Activated T-helper 1 cell treated with anti-CD3 and anti-CD28 coated beads, Interleukin-12 subunit alpha, Interleukin-12 subunit beta, Interleukin-2, Interleukin-4 antibody, amounts not matched to agents 30 ng/mL and 10 ng/mL and 1 ng/mL, durations not matched to agents 14 hours and 24 hours and 36 hours (primary cell): ENCODE measurements at regions of chr14 and their contacts with region 1.

Region 1: GRCh38 chr14:24051789-24052655 is at the start of gene CARMIL3:
- DNase-seq: peak; percentile 67
- H3K4me3 Mint-ChIP-seq: peak within 1 kb of the TSS; percentile 85
- H3K27ac Mint-ChIP-seq: peak within 1 kb of the TSS; percentile 76
- H3K4me1 Mint-ChIP-seq: peaks cover 22% of the 10 kb centered on the region
- H3K27me3 Mint-ChIP-seq: peaks cover 17% of the 10 kb centered on the region
- total RNA-seq, gene CARMIL3: 3.0 and 3.4 TPM in 2 replicates

Region 2: GRCh38 chr14:23984891-23985602 is 67.0 kb before region 1 on chr14:
- intact Hi-C with region 1: loop called (anchors 1 kb)
- DNase-seq: no peak
- H3K4me3 Mint-ChIP-seq: no peak overlapping the region
- H3K27ac Mint-ChIP-seq: no peak overlapping the region
- H3K4me1 Mint-ChIP-seq: peaks cover 25% of the 10 kb centered on the region
- H3K27me3 Mint-ChIP-seq: no peaks in the 10 kb centered on the region

Region 3: DNA sequence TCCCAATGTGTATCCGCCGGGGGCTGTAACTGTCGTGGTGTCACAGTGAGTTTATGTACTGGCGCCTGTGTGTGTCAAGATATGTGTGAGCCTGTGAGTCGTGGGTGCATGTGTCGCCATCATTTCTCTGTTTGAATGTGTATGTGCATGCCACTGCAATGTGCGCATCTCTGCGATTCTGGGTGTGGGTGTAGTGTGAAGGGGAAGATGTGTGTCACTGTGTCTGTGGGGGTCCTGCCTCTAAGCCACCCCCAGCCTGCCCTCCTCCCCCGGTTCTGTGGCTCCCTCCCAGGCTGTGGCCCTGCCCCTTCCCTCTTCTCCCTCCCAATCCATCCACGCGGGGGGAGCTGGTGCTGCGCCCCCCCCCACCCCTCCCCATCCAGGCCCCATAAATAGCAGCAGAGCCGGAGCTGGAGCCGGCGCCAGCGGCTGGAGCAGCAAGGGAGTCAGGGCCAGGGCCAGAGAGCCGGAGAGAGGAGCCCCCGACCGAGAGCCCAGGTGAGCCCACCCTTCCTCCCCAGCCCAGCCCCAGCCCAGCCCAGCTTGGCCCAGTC is 19.2 kb after region 1 on chr14 and contains the start of gene CPNE6:
- intact Hi-C with region 1: loop called (anchors 1 kb)
- DNase-seq: no peak
- H3K4me3 Mint-ChIP-seq: no peak within 1 kb of the TSS
- H3K27ac Mint-ChIP-seq: peak within 1 kb of the TSS; percentile 62
- H3K4me1 Mint-ChIP-seq: peaks cover 21% of the 10 kb centered on the region
- H3K27me3 Mint-ChIP-seq: peaks cover 8% of the 10 kb centered on the region
- total RNA-seq, gene CPNE6: not detected in 2 replicates

Region 4: GRCh38 chr14:24080888-24081738 is 29.1 kb after region 1 on chr14:
- intact Hi-C with region 1: loop called (anchors 1 kb)
- DNase-seq: peak; percentile 71
- H3K4me3 Mint-ChIP-seq: peak overlapping the region; percentile 81
- H3K27ac Mint-ChIP-seq: peak overlapping the region; percentile 50
- H3K4me1 Mint-ChIP-seq: peaks cover 17% of the 10 kb centered on the region
- H3K27me3 Mint-ChIP-seq: peaks cover 8% of the 10 kb centered on the region

Region 5: GRCh38 chr14:24108336-24108874 is 56.4 kb after region 1 on chr14:
- intact Hi-C with region 1: loop called (anchors 1 kb)
- DNase-seq: no peak
- H3K4me3 Mint-ChIP-seq: peak overlapping the region; percentile 24
- H3K27ac Mint-ChIP-seq: peak overlapping the region; percentile 95
- H3K4me1 Mint-ChIP-seq: peaks cover 34% of the 10 kb centered on the region
- H3K27me3 Mint-ChIP-seq: no peaks in the 10 kb centered on the region

Region 6: GRCh38 chr14:24212924-24213865 is 161.2 kb after region 1 on chr14 and contains the start of gene CHMP4A:
- intact Hi-C with region 1: no loop called
- DNase-seq: peak; percentile 95
- H3K4me3 Mint-ChIP-seq: peak within 1 kb of the TSS; percentile 90
- H3K27ac Mint-ChIP-seq: peak within 1 kb of the TSS; percentile 97
- H3K4me1 Mint-ChIP-seq: peaks cover 50% of the 10 kb centered on the region
- H3K27me3 Mint-ChIP-seq: no peaks in the 10 kb centered on the region
- total RNA-seq, gene CHMP4A: 86.5 and 95.8 TPM in 2 replicates